ENCODE measurements at regions of chr14 and their contacts with region 1.

Region 1: DNA sequence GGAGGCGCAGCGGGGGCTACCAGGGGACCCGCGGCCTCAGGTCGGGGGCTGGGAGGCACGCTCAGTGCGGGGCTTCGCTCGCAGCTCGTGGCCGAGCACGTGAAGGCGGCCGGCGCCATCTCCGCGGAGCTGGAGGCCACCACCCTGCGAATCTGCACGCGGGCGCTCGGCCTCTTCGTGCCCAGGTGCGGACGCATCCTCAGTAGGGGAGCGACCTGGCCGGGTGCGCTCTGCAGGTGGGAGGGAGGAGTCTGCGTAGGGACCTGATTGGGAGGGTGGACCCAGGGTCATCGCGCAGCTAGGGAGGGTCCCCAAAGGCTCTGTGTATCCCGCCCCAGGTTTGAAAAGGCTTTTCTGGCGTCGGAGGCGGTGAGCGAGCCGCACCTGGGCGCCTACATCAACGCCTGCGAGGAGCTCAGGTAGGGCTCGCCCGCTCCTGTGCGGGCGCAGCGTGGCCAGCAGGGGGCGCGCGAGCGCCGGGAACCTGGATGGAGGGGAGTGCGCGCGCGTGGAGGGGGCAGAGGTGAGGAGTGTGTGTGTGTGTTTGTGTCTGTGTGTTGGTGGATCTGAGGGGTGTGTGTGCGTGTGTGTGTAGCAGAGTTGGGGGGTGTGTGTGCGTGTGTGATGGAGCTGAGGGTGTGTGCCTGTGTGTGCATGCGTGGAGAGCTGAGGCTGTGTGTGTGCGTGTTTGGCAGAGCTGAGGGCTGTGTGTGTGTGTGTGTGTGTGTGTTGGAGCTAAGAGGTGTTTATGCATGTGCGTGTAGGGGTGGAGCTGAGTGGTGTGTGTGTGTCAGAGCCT is 10.3 kb downstream of the EXOC3L4 start:
- DNase-seq: peak; percentile 68 to 96 (median 84)
- ATAC-seq: peak; percentile 84 to 90 (median 88)
- H3K4me3 ChIP-seq: peak overlapping the region in 1 of 4 donors; percentile 22
- H3K27ac ChIP-seq: no peak overlapping the region
- H3K4me1 ChIP-seq: peaks cover under 1 to 5% (median 4%) of the 10 kb centered on the region in 3 donors
- H3K27me3 ChIP-seq: no peaks in the 10 kb centered on the region
- CTCF ChIP-seq: peak; percentile 90 to 92 (median 92)

Region 2: GRCh38 chr14:103031956-103032355 is 72.9 kb before region 1 on chr14:
- intact Hi-C with region 1: no loop called
- DNase-seq: peak in 2 of 6 donors; percentile 43 to 65
- ATAC-seq: peak; percentile 71 to 83 (median 81)
- H3K4me3 ChIP-seq: no peak overlapping the region
- H3K27ac ChIP-seq: no peak overlapping the region
- H3K4me1 ChIP-seq: peaks cover 0 to 6% (median 0%) of the 10 kb centered on the region in 3 donors
- H3K27me3 ChIP-seq: no peaks in the 10 kb centered on the region
- CTCF ChIP-seq: no peak

Region 3: DNA sequence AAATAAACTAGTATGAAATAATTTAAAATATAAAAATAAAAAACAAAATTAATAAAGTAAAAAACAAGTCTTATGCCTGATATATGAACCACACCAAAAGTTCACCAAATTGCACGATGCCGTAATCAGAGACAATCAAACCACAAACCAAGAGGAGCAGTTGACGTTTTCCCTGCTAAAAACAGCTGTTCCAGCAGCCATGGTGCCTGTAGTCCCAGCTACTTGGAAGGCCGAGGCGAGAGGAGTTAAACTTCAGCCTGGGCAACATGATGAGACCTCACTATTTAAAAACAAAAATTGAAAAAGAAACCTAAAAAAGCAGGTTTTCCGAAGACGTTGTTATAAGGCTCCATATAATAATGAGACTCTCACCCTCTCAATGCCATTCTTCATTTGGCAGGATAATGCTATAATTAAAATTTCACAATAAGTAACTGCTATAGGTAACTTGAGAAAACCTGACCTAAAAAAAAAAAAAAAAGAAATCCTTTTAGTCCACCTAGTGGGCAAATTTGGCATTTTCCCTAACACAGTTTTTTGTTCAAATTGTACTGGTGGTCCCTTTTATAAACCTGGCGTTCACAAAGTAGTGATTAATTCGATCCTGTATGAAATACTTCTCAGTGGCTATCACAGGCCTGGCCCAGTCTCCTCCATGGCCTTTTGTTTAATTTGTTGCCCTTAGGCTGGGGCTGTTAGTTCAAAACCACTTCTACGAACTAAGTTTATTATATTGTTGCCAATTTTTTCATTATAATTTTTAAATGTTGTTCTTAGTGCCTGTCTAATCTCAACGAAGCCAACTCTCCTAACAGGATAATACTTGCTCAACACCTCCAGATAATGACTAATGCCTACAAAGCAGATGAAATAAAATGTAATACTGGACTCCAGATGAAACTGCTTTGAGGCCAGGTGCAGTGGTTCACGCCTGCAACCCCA is 80.5 kb after region 1 on chr14:
- intact Hi-C with region 1: loop called in 2 of 3 experiments (anchors 10 kb)
- DNase-seq: no peak
- ATAC-seq: peak in 2 of 4 donors; percentile 19 to 46
- H3K4me3 ChIP-seq: no peak overlapping the region
- H3K27ac ChIP-seq: no peak overlapping the region
- H3K4me1 ChIP-seq: peaks cover 0 to 2% (median 0%) of the 10 kb centered on the region in 3 donors
- H3K27me3 ChIP-seq: no peaks in the 10 kb centered on the region
- CTCF ChIP-seq: peak; percentile 46 to 65 (median 54)

Region 4: GRCh38 chr14:103292426-103293374 is 187.8 kb after region 1 on chr14:
- intact Hi-C with region 1: loop called in 2 of 3 experiments (anchors 10 kb)
- DNase-seq: peak; percentile 57 to 91 (median 78)
- ATAC-seq: peak; percentile 88 to 98 (median 95)
- H3K4me3 ChIP-seq: no peak overlapping the region
- H3K27ac ChIP-seq: no peak overlapping the region
- H3K4me1 ChIP-seq: no peaks in the 10 kb centered on the region
- H3K27me3 ChIP-seq: no peaks in the 10 kb centered on the region
- CTCF ChIP-seq: peak; percentile 84 to 91 (median 86)

Measured in pancreas (tissue), 10 donors.